Stomach (tissue), 19 donors: ENCODE measurements at regions of chr14 and their contacts with region 1.

Region 1: DNA sequence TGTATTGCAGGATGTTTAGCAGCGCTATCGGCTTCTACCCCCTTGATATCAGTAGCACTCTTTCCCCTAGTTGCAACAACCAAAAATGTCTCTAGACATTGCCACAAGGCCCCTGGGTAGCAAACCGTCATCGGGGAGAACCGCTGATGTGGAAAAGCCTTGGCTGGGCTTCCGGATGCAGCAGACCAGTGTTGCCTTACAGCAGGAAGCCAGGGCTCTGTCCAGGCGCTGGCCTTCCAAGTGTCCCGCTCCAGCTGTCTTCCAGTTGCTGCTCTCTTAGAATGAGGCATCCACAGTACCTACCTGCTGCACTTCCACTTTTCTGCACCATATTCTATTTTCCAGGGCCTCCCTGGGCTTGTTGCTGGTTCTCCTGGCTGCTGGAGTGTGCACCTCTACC is 22.6 kb upstream of the SLC10A1 start:
- DNase-seq: no peak
- H3K4me3 ChIP-seq: no peak overlapping the region
- H3K27ac ChIP-seq: no peak overlapping the region
- H3K4me1 ChIP-seq: peaks cover 0 to 6% (median 3%) of the 10 kb centered on the region in 4 donors
- H3K27me3 ChIP-seq: peaks cover 0 to 29% (median 10%) of the 10 kb centered on the region in 3 donors
- CTCF ChIP-seq: no peak
- EP300 ChIP-seq: no peak
- POLR2A ChIP-seq: no peak

Region 2: GRCh38 chr14:70027785-70028428 is 208.3 kb after region 1 on chr14:
- intact Hi-C with region 1: loop called (anchors 2 kb)
- DNase-seq: peak; percentile 81 to 88
- H3K4me3 ChIP-seq: no peak overlapping the region
- H3K27ac ChIP-seq: no peak overlapping the region
- H3K4me1 ChIP-seq: no peaks in the 10 kb centered on the region
- H3K27me3 ChIP-seq: peaks cover 0 to 4% (median 0%) of the 10 kb centered on the region in 3 donors
- CTCF ChIP-seq: peak in 6 of 7 experiments; percentile 33 to 96 (median 91)
- EP300 ChIP-seq: no peak
- POLR2A ChIP-seq: no peak

Region 3: GRCh38 chr14:70842851-70843462 is 1023.4 kb after region 1 on chr14:
- intact Hi-C with region 1: no loop called
- DNase-seq: no peak
- H3K4me3 ChIP-seq: no peak overlapping the region
- H3K27ac ChIP-seq: no peak overlapping the region
- H3K4me1 ChIP-seq: no peaks in the 10 kb centered on the region
- H3K27me3 ChIP-seq: no peaks in the 10 kb centered on the region
- CTCF ChIP-seq: no peak
- EP300 ChIP-seq: no peak
- POLR2A ChIP-seq: no peak